ENCODE measurements at regions of chr5 and their contacts with region 1.

Region 1: GRCh38 chr5:142145106-142145900 is 36.7 kb downstream of the NDFIP1 start:
- DNase-seq: peak in 3 of 5 donors; percentile 16 to 54 (median 33)
- H3K4me3 ChIP-seq: no peak overlapping the region
- H3K27ac ChIP-seq: no peak overlapping the region
- H3K4me1 ChIP-seq: no peaks in the 10 kb centered on the region
- H3K27me3 ChIP-seq: no peaks in the 10 kb centered on the region
- CTCF ChIP-seq: peak in 1 of 3 donors; percentile 26
- EP300 ChIP-seq: no peak
- POLR2A ChIP-seq: no peak

Region 2: GRCh38 chr5:141992349-141992963 is 152.8 kb before region 1 on chr5:
- intact Hi-C with region 1: loop called in 1 of 4 experiments (anchors 1 kb)
- DNase-seq: peak; percentile 61 to 79 (median 72)
- H3K4me3 ChIP-seq: no peak overlapping the region
- H3K27ac ChIP-seq: peak overlapping the region in 1 of 2 donors; percentile 15
- H3K4me1 ChIP-seq: no peaks in the 10 kb centered on the region
- H3K27me3 ChIP-seq: no peaks in the 10 kb centered on the region
- CTCF ChIP-seq: peak; percentile 42 to 66 (median 65)
- EP300 ChIP-seq: no peak
- POLR2A ChIP-seq: no peak

Region 3: DNA sequence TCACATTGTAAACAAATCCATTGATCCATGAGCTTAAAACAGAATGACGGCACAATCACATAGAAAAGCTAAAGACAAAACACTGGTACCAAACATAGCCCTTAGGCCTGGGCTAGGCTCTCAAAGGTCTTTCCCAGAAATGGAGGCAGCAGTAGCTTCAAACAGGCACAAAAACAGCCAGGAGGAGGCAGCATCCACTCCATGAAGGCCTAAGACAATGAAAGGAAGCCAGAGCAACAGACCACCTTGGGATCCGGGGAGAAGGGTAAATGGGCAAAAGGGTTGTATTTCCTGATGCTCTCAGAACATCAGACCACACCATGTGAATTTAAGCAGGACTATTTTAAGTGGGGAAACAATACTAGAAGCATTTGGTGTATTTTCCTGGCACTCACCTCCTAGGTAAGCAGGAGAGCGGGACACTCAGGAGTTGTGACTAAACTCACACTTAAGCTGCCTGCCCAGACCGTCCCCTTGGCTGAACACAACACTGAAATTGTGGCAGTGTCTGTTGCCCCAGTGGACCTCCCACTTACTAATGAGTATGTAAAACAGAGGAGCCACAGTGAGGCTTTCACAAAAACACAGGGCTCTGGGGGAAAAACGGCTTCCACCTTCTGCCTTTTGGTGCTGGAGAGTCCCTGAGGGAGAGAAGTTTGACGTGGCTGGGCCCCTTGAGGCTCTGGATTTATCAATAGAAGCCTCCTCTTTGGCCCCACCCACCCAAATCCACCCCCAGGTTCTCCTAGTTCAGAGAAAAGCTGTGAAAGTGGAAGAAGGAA is 144.4 kb before region 1 on chr5:
- intact Hi-C with region 1: loop called in 1 of 4 experiments (anchors 10 kb)
- DNase-seq: no peak
- H3K4me3 ChIP-seq: no peak overlapping the region
- H3K27ac ChIP-seq: no peak overlapping the region
- H3K4me1 ChIP-seq: no peaks in the 10 kb centered on the region
- H3K27me3 ChIP-seq: no peaks in the 10 kb centered on the region
- CTCF ChIP-seq: no peak
- EP300 ChIP-seq: no peak
- POLR2A ChIP-seq: no peak

Region 4: GRCh38 chr5:142012792-142013388 is 132.4 kb before region 1 on chr5 and contains the start of gene GNPDA1:
- intact Hi-C with region 1: loop called in 2 of 4 experiments (anchors 10 kb)
- DNase-seq: peak; percentile 80 to 90 (median 84)
- H3K4me3 ChIP-seq: peak within 1 kb of the TSS; percentile 78
- H3K27ac ChIP-seq: peak within 1 kb of the TSS; percentile 76 to 91
- H3K4me1 ChIP-seq: no peaks in the 10 kb centered on the region
- H3K27me3 ChIP-seq: no peaks in the 10 kb centered on the region
- CTCF ChIP-seq: peak in 2 of 3 donors; percentile 32 to 54
- EP300 ChIP-seq: no peak
- POLR2A ChIP-seq: peak; percentile 52
- total RNA-seq, gene GNPDA1: 20.3 to 40.9 (median 35.1) TPM

Region 5: DNA sequence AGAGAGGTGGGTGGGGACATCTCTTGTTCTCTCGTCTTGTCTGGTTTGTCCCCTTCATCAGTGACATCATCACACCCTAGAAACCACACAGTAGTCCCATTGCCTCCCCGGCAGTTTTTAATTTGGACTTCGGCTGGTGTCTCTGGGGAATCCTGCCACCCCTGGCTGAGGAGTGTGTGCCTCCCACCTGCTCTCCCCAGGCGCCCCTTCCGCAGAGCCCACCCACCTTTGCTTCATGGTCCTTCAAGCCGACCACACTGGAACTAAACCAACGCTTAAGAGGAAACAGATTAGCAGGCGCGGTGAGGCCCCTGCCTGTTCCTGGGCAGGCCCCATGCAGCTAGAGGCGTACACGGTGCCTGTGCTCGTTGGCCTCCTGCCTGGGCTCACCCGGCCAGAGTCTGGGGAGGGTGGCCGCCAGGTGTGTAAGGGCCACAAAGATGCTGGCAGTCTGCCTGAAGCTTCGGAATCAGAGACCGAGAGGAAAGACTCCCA is 287.1 kb after region 1 on chr5:
- intact Hi-C with region 1: no loop called
- DNase-seq: no peak
- H3K4me3 ChIP-seq: no peak overlapping the region
- H3K27ac ChIP-seq: no peak overlapping the region
- H3K4me1 ChIP-seq: no peaks in the 10 kb centered on the region
- H3K27me3 ChIP-seq: no peaks in the 10 kb centered on the region
- CTCF ChIP-seq: no peak
- EP300 ChIP-seq: no peak
- POLR2A ChIP-seq: no peak

Region 6: DNA sequence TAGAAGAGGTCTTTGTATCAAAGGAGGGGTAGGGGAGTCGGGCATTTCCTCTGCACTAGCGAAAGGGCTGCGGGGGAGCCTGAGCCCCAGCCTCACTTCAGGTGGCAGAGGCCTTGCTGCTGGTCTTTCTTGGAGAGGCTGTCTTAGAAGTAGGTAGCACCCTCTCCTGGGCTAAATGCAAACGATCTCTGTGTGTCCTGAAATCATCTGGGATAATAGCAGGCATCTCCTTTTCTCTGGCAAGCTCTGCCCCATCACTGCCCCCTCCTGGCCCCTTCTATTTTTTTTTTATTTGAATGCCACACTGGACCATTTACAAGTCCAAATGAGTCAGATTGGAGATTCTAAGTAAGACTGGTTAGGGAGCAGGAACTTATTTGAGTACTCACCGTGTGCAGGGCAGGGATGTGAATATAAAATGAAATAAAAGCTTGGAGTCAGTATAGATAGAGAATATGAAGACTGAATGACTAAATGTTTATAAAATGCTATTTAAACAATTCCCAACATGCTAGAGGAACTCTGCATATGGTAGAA is 403.5 kb after region 1 on chr5:
- intact Hi-C with region 1: loop called in 2 of 4 experiments (anchors 5 to 10 kb)
- DNase-seq: peak in 4 of 5 donors; percentile 26 to 48 (median 35)
- H3K4me3 ChIP-seq: no peak overlapping the region
- H3K27ac ChIP-seq: no peak overlapping the region
- H3K4me1 ChIP-seq: no peaks in the 10 kb centered on the region
- H3K27me3 ChIP-seq: no peaks in the 10 kb centered on the region
- CTCF ChIP-seq: peak in 2 of 3 donors; percentile 35 to 46
- EP300 ChIP-seq: no peak
- POLR2A ChIP-seq: no peak

Region 7: DNA sequence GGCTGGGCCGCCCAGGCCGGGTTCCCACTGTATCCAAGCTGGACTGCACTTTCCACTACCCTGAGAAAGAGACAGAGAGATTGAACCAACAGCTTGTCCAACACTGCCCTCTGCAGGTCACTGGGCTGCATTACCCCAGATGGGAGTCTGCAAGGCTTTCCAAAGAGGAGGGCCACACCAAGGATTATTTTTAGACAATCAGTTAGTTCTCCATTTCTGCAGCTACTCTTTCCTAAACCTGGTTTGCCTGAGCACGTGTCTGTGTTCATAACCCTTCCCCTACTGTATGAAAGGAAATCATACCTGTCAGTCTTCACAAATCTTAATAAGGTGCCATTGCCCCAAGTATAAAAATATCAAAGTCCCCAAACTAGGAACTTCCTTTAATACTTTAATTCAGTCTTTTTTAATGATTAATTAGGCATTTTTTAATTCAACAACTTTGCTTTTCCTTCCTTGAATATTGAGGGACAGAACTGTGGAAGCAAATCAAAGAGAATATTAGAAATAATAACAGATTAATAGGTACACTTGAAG is 553.9 kb after region 1 on chr5:
- intact Hi-C with region 1: loop called in 1 of 4 experiments (anchors 5 kb)
- DNase-seq: peak; percentile 77 to 89 (median 87)
- H3K4me3 ChIP-seq: no peak overlapping the region
- H3K27ac ChIP-seq: no peak overlapping the region
- H3K4me1 ChIP-seq: peaks cover 11% of the 10 kb centered on the region
- H3K27me3 ChIP-seq: no peaks in the 10 kb centered on the region
- CTCF ChIP-seq: peak; percentile 59 to 91 (median 82)
- EP300 ChIP-seq: no peak
- POLR2A ChIP-seq: peak; percentile 24